GM12878 (cell line): ENCODE measurements at regions of chr9 and their contacts with region 1.

Region 1: GRCh38 chr9:5450359-5451091 is at the start of gene CD274:
- DNase-seq: no peak
- ATAC-seq: peak; percentile 75
- H3K4me3 ChIP-seq: peak within 1 kb of the TSS; percentile 72
- H3K27ac ChIP-seq: peak within 1 kb of the TSS; percentile 97
- H3K4me1 ChIP-seq: peaks cover 46% of the 10 kb centered on the region
- H3K27me3 ChIP-seq: no peaks in the 10 kb centered on the region
- CTCF ChIP-seq: peak; percentile 57 to 86 (median 81)
- EP300 ChIP-seq: 0 out of 4 replicates have a peak, but pooled peaks of 1 of the 2 experiments have one; percentile 33
- POLR2A ChIP-seq: peak; percentile 95
- RAD21 ChIP-seq: peak; percentile 92
- polyA plus RNA-seq, gene CD274: 9.4 to 12.2 TPM

Region 2: DNA sequence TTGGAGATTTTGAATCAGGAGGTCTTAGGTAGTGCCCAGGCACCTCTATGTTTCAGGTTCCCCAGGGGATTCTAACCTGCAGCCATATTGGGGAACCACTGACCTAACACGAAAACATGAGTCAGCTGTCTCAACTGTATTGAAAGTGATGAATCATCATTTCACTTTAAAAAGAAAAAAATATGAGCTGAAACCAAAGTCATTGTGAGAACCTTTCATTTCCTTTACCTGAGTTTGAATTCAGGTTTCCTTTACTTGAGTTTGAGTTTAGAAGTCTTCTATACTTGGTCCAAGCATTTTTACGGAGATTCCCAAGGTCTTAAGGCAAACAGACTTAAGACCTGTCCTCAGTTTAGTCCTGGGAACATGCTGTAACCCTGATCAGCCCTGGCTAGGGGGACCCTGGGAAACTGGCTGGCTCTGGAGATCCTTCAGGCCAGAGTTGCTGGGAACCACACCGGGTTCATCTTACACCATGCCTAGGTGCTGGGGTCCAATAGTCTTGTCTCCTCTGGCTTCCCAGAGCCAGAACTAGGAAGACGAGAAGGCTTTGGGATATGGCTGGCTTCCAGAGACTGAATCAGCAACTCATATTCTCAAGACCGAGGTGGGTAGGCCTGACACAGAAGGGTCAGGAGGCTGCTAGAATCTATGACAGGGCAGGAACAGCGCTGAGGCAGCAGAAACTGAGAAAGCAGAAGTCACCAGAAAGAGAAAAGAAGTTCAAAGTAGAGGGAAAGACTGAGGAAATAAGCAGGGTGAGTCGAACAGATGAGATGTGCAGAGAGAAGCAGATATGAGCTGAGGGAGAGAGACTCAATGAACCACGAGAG is 43.4 kb after region 1 on chr9:
- CTCF ChIA-PET with region 1: interaction called, 11 read pairs
- POLR2A ChIA-PET with region 1: interaction called, 16 read pairs
- RAD21 ChIA-PET with region 1: interaction called, 17 read pairs
- SMC1A ChIA-PET with region 1: interaction called, 19 read pairs
- in situ Hi-C with region 1: no loop called
- intact Hi-C with region 1: no loop called
- DNase-seq: peak; percentile 96
- ATAC-seq: peak; percentile 91
- H3K4me3 ChIP-seq: peak overlapping the region; percentile 30; the same call in 1 of the 2 replicates
- H3K27ac ChIP-seq: peak overlapping the region; percentile 92
- H3K4me1 ChIP-seq: peaks cover 16% of the 10 kb centered on the region
- H3K27me3 ChIP-seq: no peaks in the 10 kb centered on the region
- CTCF ChIP-seq: no peak
- EP300 ChIP-seq: peak in 1 of 2 experiments; percentile 65; a peak in 1 of 4 replicates
- POLR2A ChIP-seq: peak; percentile 63
- RAD21 ChIP-seq: 0 out of 2 replicates have a peak, but pooled peaks have one; percentile 9

Region 3: GRCh38 chr9:5518171-5518936 is 67.8 kb after region 1 on chr9:
- CTCF ChIA-PET with region 1: interaction called, 19 read pairs
- POLR2A ChIA-PET with region 1: interaction called, 26 read pairs
- RAD21 ChIA-PET with region 1: interaction called, 59 read pairs
- SMC1A ChIA-PET with region 1: interaction called, 54 read pairs
- in situ Hi-C with region 1: no loop called
- intact Hi-C with region 1: loop called (anchors 2 kb)
- DNase-seq: no peak
- ATAC-seq: peak; percentile 49
- H3K4me3 ChIP-seq: peak overlapping the region; percentile 35; the same call in 1 of the 2 replicates
- H3K27ac ChIP-seq: peak overlapping the region; percentile 58
- H3K4me1 ChIP-seq: peaks cover 47% of the 10 kb centered on the region
- H3K27me3 ChIP-seq: no peaks in the 10 kb centered on the region
- CTCF ChIP-seq: no peak
- EP300 ChIP-seq: no peak
- POLR2A ChIP-seq: no peak
- RAD21 ChIP-seq: 0 out of 2 replicates have a peak, but pooled peaks have one; percentile 17

Region 4: GRCh38 chr9:5557606-5558587 is 107.4 kb after region 1 on chr9:
- CTCF ChIA-PET with region 1: interaction called, 6 read pairs
- POLR2A ChIA-PET with region 1: interaction called, 3 read pairs
- RAD21 ChIA-PET with region 1: interaction called, 19 read pairs
- SMC1A ChIA-PET with region 1: interaction called, 16 read pairs
- in situ Hi-C with region 1: no loop called
- intact Hi-C with region 1: no loop called
- DNase-seq: no peak
- ATAC-seq: peak; percentile 88
- H3K4me3 ChIP-seq: no peak overlapping the region
- H3K27ac ChIP-seq: peak overlapping the region; percentile 66
- H3K4me1 ChIP-seq: peaks cover 27% of the 10 kb centered on the region
- H3K27me3 ChIP-seq: no peaks in the 10 kb centered on the region
- CTCF ChIP-seq: no peak
- EP300 ChIP-seq: no peak
- POLR2A ChIP-seq: no peak
- RAD21 ChIP-seq: no peak

Region 5: GRCh38 chr9:5575000-5575399 is 124.5 kb after region 1 on chr9:
- CTCF ChIA-PET with region 1: interaction called, 6 read pairs
- POLR2A ChIA-PET with region 1: interaction called, 3 read pairs
- RAD21 ChIA-PET with region 1: interaction called, 15 read pairs
- SMC1A ChIA-PET with region 1: interaction called, 4 read pairs
- in situ Hi-C with region 1: no loop called
- intact Hi-C with region 1: no loop called
- DNase-seq: no peak
- ATAC-seq: no peak
- H3K4me3 ChIP-seq: no peak overlapping the region
- H3K27ac ChIP-seq: no peak overlapping the region
- H3K4me1 ChIP-seq: peaks cover 6% of the 10 kb centered on the region
- H3K27me3 ChIP-seq: no peaks in the 10 kb centered on the region
- CTCF ChIP-seq: peak in 2 of 3 experiments; percentile 23 to 25; a peak in 2 of 6 replicates
- EP300 ChIP-seq: no peak
- POLR2A ChIP-seq: no peak
- RAD21 ChIP-seq: peak; percentile 41; the same call in 1 of the 2 replicates

Region 6: GRCh38 chr9:5832543-5833529 is 382.3 kb after region 1 on chr9 and contains the start of gene ERMP1:
- CTCF ChIA-PET with region 1: no interaction called
- POLR2A ChIA-PET with region 1: no interaction called
- RAD21 ChIA-PET with region 1: no interaction called
- SMC1A ChIA-PET with region 1: no interaction called
- in situ Hi-C with region 1: no loop called
- intact Hi-C with region 1: loop called (anchors 10 kb)
- DNase-seq: no peak
- ATAC-seq: peak; percentile 85
- H3K4me3 ChIP-seq: peak within 1 kb of the TSS; percentile 97
- H3K27ac ChIP-seq: peak within 1 kb of the TSS; percentile 70
- H3K4me1 ChIP-seq: peaks cover 5% of the 10 kb centered on the region; the same call in 1 of the 2 replicates
- H3K27me3 ChIP-seq: no peaks in the 10 kb centered on the region
- CTCF ChIP-seq: peak; percentile 85 to 97 (median 89); a peak in 5 of 6 replicates
- EP300 ChIP-seq: no peak
- POLR2A ChIP-seq: peak; percentile 91
- RAD21 ChIP-seq: peak; percentile 62
- polyA plus RNA-seq, gene ERMP1: 2.4 to 2.7 TPM